CD8-positive, alpha-beta T cell (primary cell): ENCODE measurements at regions of chr12 and their contacts with region 1.

Region 1: GRCh38 chr12:120249875-120250795 is 15.4 kb downstream of the PXN start:
- DNase-seq: peak in 6 of 9 experiments; percentile 25 to 80 (median 54)
- ATAC-seq: no peak
- H3K4me3 ChIP-seq: peak overlapping the region; percentile 33 to 37
- H3K4me3 Mint-ChIP-seq: peak overlapping the region; percentile 71
- H3K27ac ChIP-seq: peak overlapping the region; percentile 28 to 77
- H3K27ac Mint-ChIP-seq: peak overlapping the region; percentile 85
- H3K4me1 ChIP-seq: peaks cover 83% of the 10 kb centered on the region
- H3K4me1 Mint-ChIP-seq: peaks cover 76% of the 10 kb centered on the region
- H3K27me3 ChIP-seq: no peaks in the 10 kb centered on the region
- H3K27me3 Mint-ChIP-seq: no peaks in the 10 kb centered on the region
- CTCF ChIP-seq: no peak

Region 2: GRCh38 chr12:120012067-120012621 is 238.0 kb before region 1 on chr12:
- CTCF ChIA-PET with region 1: no interaction called
- POLR2A ChIA-PET with region 1: interaction called, 3 read pairs
- intact Hi-C with region 1: loop called in 1 of 2 experiments (anchors 2 kb)
- DNase-seq: peak in 8 of 9 experiments; percentile 23 to 97 (median 71)
- ATAC-seq: peak; percentile 61
- H3K4me3 ChIP-seq: no peak overlapping the region
- H3K4me3 Mint-ChIP-seq: peak overlapping the region; percentile 76
- H3K27ac ChIP-seq: peak overlapping the region; percentile 52 to 73
- H3K27ac Mint-ChIP-seq: peak overlapping the region; percentile 99
- H3K4me1 ChIP-seq: peaks cover 69% of the 10 kb centered on the region
- H3K4me1 Mint-ChIP-seq: peaks cover 83% of the 10 kb centered on the region
- H3K27me3 ChIP-seq: no peaks in the 10 kb centered on the region
- H3K27me3 Mint-ChIP-seq: no peaks in the 10 kb centered on the region
- CTCF ChIP-seq: no peak

Region 3: DNA sequence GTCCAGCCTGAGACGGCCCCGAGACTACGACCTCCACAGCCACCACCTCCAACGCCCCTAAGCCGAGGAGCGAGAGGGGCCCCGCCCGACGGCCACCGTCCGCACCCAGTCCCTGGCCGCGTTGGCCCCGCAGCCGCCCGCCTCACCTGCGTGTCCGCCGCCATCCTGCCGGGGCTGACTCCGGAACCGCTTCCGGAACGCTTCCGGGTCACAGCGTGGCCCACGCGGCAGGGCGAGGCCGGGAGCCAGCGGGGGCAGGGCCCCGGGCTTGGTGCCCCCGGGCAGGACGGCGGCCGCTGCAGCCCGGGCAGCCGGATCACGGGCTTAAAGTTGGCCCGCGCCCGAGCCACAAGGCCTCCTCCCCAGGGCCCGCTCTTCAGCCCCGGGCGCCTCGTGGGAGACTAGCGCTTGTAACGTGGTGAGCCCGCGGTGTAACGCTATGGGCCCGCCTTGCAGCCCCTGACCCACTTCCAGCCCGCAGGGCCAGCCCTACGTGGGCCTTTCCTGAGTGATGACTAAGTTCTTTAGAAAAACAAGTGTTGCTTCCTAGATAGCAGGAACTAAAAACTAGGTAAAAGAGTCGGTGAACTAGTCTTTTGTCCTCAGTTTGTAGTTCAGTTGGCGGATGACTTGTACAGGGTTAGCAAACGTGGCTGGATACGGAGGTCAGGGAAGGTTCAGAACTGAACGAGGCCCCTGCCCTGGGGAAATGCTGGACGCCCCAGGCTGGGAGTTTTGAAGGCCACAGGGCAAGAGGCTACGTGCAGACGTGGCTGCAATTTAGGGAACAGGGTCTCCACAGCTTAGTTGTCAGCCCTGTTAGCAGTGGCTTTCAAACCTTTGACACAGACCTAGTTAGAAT is 55.4 kb before region 1 on chr12 and contains the start of gene GCN1:
- CTCF ChIA-PET with region 1: no interaction called
- POLR2A ChIA-PET with region 1: no interaction called
- intact Hi-C with region 1: no loop called
- DNase-seq: peak; percentile 76 to 94 (median 88)
- ATAC-seq: peak; percentile 86
- H3K4me3 ChIP-seq: peak within 1 kb of the TSS; percentile 67 to 72
- H3K4me3 Mint-ChIP-seq: peak within 1 kb of the TSS; percentile 82
- H3K27ac ChIP-seq: peak within 1 kb of the TSS; percentile 73 to 88
- H3K27ac Mint-ChIP-seq: peak within 1 kb of the TSS; percentile 95
- H3K4me1 ChIP-seq: peaks cover 36% of the 10 kb centered on the region
- H3K4me1 Mint-ChIP-seq: peaks cover 44% of the 10 kb centered on the region
- H3K27me3 ChIP-seq: no peaks in the 10 kb centered on the region
- H3K27me3 Mint-ChIP-seq: no peaks in the 10 kb centered on the region
- CTCF ChIP-seq: no peak
- total RNA-seq, gene GCN1: 161 to 163 TPM

Region 4: DNA sequence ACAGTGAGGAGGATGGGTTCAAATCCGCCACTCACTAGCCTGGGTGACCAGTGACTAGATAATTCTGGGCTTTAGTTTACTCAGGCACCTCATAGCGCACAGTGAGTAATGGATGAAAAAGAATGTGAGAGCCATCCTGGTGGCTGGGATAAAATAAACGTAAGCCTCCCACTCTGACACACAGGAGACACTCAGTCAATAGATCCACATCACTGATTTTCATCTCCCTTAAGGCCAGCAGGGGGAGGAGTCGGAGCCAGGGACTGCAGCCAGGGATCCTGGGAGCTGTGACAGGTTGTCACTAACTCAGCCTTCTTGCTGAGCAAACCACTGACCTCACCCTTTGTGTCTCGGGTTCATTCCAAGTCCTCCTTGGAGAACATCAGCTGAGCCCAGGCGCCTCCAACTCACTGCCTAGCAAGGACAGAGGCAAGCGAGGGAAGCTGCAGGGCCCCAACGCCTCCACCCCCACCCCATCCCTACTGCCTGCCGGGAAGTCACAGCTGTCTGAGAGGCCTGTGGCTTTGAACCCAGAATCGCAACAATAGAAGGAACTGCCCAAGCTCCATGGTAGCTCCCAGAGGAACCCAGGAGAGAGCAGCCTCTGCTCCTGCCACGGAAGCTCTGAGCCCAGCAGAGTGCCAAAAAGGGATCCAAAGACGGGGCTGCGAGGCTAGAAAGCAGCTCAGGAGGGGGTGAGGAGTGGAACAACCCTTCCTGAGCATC is 15.3 kb before region 1 on chr12:
- CTCF ChIA-PET with region 1: interaction called, 193 read pairs
- POLR2A ChIA-PET with region 1: interaction called, 39 read pairs
- intact Hi-C with region 1: loop called (anchors 1 kb)
- DNase-seq: no peak
- ATAC-seq: no peak
- H3K4me3 ChIP-seq: no peak overlapping the region
- H3K4me3 Mint-ChIP-seq: no peak overlapping the region
- H3K27ac ChIP-seq: peak overlapping the region in 1 of 2 experiments; percentile 41
- H3K27ac Mint-ChIP-seq: peak overlapping the region; percentile 45
- H3K4me1 ChIP-seq: peaks cover 81% of the 10 kb centered on the region
- H3K4me1 Mint-ChIP-seq: peaks cover 80% of the 10 kb centered on the region
- H3K27me3 ChIP-seq: no peaks in the 10 kb centered on the region
- H3K27me3 Mint-ChIP-seq: no peaks in the 10 kb centered on the region
- CTCF ChIP-seq: no peak

Region 5: GRCh38 chr12:120265473-120266179 is 15.5 kb after region 1 on chr12 and contains the start of gene PXN:
- CTCF ChIA-PET with region 1: interaction called, 70 read pairs
- POLR2A ChIA-PET with region 1: interaction called, 57 read pairs
- intact Hi-C with region 1: loop called (anchors 1 kb)
- DNase-seq: peak; percentile 80 to 97 (median 93)
- ATAC-seq: peak; percentile 90
- H3K4me3 ChIP-seq: peak within 1 kb of the TSS; percentile 77 to 94
- H3K4me3 Mint-ChIP-seq: peak within 1 kb of the TSS; percentile 97
- H3K27ac ChIP-seq: peak within 1 kb of the TSS; percentile 69 to 71
- H3K27ac Mint-ChIP-seq: peak within 1 kb of the TSS; percentile 95
- H3K4me1 ChIP-seq: peaks cover 40% of the 10 kb centered on the region
- H3K4me1 Mint-ChIP-seq: peaks cover 45% of the 10 kb centered on the region
- H3K27me3 ChIP-seq: no peaks in the 10 kb centered on the region
- H3K27me3 Mint-ChIP-seq: no peaks in the 10 kb centered on the region
- CTCF ChIP-seq: peak; percentile 73
- total RNA-seq, gene PXN: 170 to 171 TPM